Cardiac septum (tissue), 1 donor: ENCODE measurements at regions of chr17 and their contacts with region 1.

Region 1: GRCh38 chr17:74305865-74306654 is 20.0 kb upstream of the KIF19 start:
- DNase-seq: no peak

Region 2: GRCh38 chr17:74361230-74362068 is 55.4 kb after region 1 on chr17 and contains the start of gene BTBD17:
- intact Hi-C with region 1: loop called (anchors 2 kb)
- DNase-seq: no peak
- total RNA-seq, gene BTBD17: not detected